ENCODE measurements at regions of chr3 and their contacts with region 1.

Region 1: GRCh38 chr3:192566706-192567290 is 160.5 kb downstream of the FGF12 start:
- DNase-seq: peak; percentile 73
- H3K4me3 ChIP-seq: no peak overlapping the region
- H3K27ac ChIP-seq: no peak overlapping the region
- H3K4me1 ChIP-seq: no peaks in the 10 kb centered on the region
- CTCF ChIP-seq: peak; percentile 89

Region 2: DNA sequence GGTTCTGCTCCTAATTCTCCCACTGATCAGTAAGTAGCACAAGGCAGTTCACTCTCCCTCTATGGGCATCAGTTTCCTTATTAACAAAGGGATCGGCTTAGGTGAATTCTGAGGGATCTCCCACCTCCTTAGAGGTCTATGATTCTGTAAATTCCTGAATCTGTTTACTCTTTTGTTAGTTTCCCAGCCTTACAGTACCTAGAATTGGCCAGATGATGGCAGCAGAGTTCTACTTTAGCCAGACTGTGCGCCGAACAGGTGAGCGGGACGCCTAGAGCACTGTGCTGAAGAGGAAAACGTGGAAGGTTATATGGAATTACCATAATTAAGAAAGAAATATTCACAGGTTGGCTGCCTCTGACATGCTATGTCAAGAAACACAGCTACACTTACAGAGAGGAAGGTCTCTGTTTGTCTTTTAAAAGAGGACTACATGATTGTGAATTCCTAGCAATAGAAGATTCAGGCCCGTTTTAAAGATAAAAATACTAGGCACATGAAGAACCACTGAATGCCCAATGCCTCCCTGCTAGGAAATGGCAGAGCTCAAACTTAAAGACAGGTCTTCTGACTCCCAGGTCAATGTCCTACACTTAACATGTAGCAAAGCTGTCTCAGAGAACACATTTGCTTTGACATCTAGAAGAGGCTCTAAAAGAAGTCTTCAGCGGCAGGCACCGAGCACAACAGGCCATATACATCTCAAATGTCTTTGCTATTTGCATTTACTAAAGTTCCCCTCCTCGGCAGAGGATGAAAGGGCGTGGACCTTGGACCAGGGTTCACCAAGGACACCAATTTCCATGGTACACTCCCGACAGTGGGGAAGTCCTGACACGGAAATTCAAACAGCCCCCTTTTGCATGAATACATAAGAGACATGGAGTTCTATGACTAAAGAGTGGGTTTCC is 99.3 kb before region 1 on chr3:
- CTCF ChIA-PET with region 1: no interaction called
- POLR2A ChIA-PET with region 1: interaction called, 5 read pairs
- intact Hi-C with region 1: loop called (anchors 2 kb)
- DNase-seq: peak; percentile 69
- H3K4me3 ChIP-seq: no peak overlapping the region
- H3K27ac ChIP-seq: no peak overlapping the region
- H3K4me1 ChIP-seq: no peaks in the 10 kb centered on the region
- CTCF ChIP-seq: peak; percentile 98

Region 3: DNA sequence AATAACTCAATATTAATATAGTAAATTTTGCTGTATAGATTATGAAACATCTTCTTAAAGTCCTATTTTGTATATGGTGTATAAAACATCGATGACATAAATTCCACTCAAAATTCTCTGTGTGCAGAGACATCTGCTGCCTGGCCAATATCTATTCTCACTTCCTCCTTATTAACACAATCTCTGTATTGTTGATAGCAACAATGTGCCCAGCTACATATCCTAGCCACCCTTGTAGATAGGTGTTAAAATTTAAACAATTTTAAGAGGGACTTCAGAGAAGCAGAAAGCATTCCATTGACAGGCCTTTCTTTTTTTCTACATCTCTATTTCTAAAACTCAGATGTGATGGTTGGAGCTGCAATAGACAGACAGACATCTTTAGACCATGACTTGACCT is 88.2 kb after region 1 on chr3:
- CTCF ChIA-PET with region 1: no interaction called
- POLR2A ChIA-PET with region 1: no interaction called
- intact Hi-C with region 1: no loop called
- DNase-seq: no peak
- H3K4me3 ChIP-seq: no peak overlapping the region
- H3K27ac ChIP-seq: no peak overlapping the region
- H3K4me1 ChIP-seq: no peaks in the 10 kb centered on the region
- CTCF ChIP-seq: no peak

Region 4: DNA sequence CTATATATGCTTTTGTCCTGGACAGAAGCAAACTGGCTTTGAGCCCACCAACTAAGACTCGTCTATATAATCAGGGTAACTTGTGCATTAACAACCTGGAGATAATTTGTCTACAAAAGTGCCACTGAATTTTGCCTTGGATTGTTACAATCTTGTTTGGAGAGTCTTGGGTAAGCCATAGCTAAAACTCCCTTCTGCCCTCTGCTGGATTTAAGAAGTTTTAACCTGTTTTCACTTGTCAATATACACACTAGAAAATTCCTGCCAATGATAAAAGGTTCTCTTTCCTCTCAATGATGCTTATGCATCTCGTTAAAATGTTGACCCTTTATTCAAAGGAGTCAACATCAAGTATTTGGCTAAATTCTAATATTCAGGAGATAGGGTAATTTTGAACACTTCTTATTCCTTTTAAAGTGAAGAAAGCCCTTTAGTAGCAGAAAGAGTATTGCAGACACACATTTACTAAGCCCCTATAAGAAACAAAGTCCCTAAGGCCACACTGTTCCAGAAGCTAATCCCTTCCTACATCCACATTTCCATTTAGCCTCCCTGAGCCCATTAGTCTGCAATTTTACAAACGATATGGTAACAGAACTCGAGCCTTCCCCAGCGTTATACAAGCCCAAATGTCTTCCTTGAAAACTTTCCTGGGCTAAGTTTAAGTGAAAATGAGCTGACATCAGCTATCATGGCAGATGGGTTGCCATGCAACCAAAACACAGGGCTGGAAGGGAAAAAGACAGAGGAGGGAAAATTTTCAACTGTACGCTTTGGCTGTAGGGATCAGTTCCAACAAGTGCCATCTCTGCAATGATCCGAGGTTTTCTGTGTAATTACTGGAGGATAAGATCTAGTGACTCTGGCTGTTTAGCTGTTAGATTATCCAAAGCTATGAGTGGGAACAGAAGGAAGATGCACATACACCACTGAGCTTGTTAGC is 236.4 kb after region 1 on chr3:
- CTCF ChIA-PET with region 1: no interaction called
- POLR2A ChIA-PET with region 1: no interaction called
- intact Hi-C with region 1: loop called (anchors 1 kb)
- DNase-seq: peak; percentile 63
- H3K4me3 ChIP-seq: no peak overlapping the region
- H3K27ac ChIP-seq: no peak overlapping the region
- H3K4me1 ChIP-seq: no peaks in the 10 kb centered on the region
- CTCF ChIP-seq: peak; percentile 82

Region 5: GRCh38 chr3:193040836-193041672 is 474.3 kb after region 1 on chr3:
- CTCF ChIA-PET with region 1: no interaction called
- POLR2A ChIA-PET with region 1: no interaction called
- intact Hi-C with region 1: loop called (anchors 5 kb)
- DNase-seq: peak; percentile 56
- H3K4me3 ChIP-seq: no peak overlapping the region
- H3K27ac ChIP-seq: no peak overlapping the region
- H3K4me1 ChIP-seq: no peaks in the 10 kb centered on the region
- CTCF ChIP-seq: peak; percentile 78

Region 6: GRCh38 chr3:193465992-193466608 is 899.3 kb after region 1 on chr3:
- CTCF ChIA-PET with region 1: no interaction called
- POLR2A ChIA-PET with region 1: no interaction called
- intact Hi-C with region 1: loop called (anchors 10 kb)
- DNase-seq: no peak
- H3K4me3 ChIP-seq: no peak overlapping the region
- H3K27ac ChIP-seq: no peak overlapping the region
- H3K4me1 ChIP-seq: no peaks in the 10 kb centered on the region
- CTCF ChIP-seq: no peak

Region 7: GRCh38 chr3:193572426-193572908 is 1005.7 kb after region 1 on chr3:
- CTCF ChIA-PET with region 1: no interaction called
- POLR2A ChIA-PET with region 1: no interaction called
- intact Hi-C with region 1: loop called (anchors 5 kb)
- DNase-seq: peak; percentile 62
- H3K4me3 ChIP-seq: no peak overlapping the region
- H3K27ac ChIP-seq: no peak overlapping the region
- H3K4me1 ChIP-seq: no peaks in the 10 kb centered on the region
- CTCF ChIP-seq: peak; percentile 95

Measured in OCI-LY7 (cell line).